CD4-positive, alpha-beta T cell (primary cell): ENCODE measurements at regions of chr17 and their contacts with region 1.

Region 1: DNA sequence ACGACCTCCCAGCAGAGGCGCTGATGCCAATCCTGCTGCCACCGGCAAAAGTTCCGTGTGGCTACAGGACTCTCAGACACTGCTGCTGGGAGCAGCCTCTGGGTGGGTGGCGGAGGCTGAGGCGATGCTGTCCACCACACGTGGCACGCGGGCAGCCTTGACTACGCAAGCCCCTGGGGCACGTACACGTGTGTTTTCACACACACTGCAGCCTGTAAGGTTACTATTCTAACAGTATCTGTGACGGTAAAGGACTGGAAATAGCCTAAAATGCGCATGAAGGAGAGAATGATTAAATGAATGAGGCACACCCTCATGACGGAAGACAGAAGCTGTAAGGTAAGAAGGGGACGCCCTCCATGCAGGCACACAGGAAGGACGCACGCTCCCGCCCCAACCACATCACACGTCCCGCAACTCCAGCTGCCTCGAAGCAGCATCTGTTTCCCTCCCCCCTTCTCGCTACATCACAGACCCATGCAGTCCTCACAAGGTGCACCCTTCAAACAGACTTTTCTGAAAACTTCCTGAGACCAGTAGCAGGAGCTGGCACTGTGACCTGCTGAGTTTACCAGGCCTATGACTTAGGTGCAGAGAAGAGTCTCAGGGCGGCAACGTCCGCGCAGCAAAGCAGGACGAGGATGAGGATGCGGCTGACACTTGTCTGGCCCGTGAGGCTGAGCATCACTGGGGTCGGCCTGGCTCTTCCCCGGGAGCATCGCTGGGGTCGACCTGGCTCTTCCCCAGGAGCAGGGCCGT is 28.7 kb upstream of the FASN start:
- DNase-seq: peak; percentile 77 to 98 (median 88)
- ATAC-seq: peak; percentile 78
- H3K4me3 ChIP-seq: peak overlapping the region; percentile 40
- H3K4me3 Mint-ChIP-seq: peak overlapping the region; percentile 39
- H3K27ac ChIP-seq: peak overlapping the region; percentile 83 to 94
- H3K27ac Mint-ChIP-seq: peak overlapping the region; percentile 97
- H3K4me1 ChIP-seq: peaks cover 79% of the 10 kb centered on the region
- H3K4me1 Mint-ChIP-seq: peaks cover 76% of the 10 kb centered on the region
- H3K27me3 ChIP-seq: no peaks in the 10 kb centered on the region
- H3K27me3 Mint-ChIP-seq: no peaks in the 10 kb centered on the region
- CTCF ChIP-seq: peak; percentile 19

Region 2: GRCh38 chr17:81794509-81794908 is 332.2 kb before region 1 on chr17:
- CTCF ChIA-PET with region 1: no interaction called
- POLR2A ChIA-PET with region 1: no interaction called
- intact Hi-C with region 1: no loop called
- DNase-seq: no peak
- ATAC-seq: no peak
- H3K4me3 ChIP-seq: no peak overlapping the region
- H3K4me3 Mint-ChIP-seq: no peak overlapping the region
- H3K27ac ChIP-seq: no peak overlapping the region
- H3K27ac Mint-ChIP-seq: no peak overlapping the region
- H3K4me1 ChIP-seq: no peaks in the 10 kb centered on the region
- H3K4me1 Mint-ChIP-seq: no peaks in the 10 kb centered on the region
- H3K27me3 ChIP-seq: peaks cover 8 to 9% of the 10 kb centered on the region in 2 experiments
- H3K27me3 Mint-ChIP-seq: peaks cover 4% of the 10 kb centered on the region
- CTCF ChIP-seq: no peak

Region 3: DNA sequence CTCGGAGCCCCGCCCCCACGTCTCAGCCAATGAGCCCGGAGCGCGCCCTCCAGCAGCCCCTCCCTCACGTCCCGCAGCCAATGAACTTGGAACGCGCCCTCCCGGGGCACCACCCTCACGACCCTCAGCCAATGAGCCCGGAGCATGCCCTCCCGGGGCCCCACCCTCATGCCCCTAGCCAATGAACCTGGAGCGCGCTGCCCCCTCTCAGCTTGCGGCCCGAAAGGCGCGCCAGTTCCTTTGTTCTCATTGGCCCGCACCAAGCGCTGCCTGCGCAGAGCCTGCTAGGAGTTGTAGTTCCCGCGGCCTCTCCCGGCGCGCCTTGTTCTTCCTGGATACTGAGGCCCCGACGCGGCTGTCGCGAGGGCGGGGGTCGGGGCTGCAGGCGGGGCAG is 103.8 kb before region 1 on chr17 and contains the start of gene LRRC45:
- CTCF ChIA-PET with region 1: no interaction called
- POLR2A ChIA-PET with region 1: interaction called, 12 read pairs
- intact Hi-C with region 1: no loop called
- DNase-seq: peak; percentile 99 to 100 (median 100)
- ATAC-seq: peak; percentile 94
- H3K4me3 ChIP-seq: peak within 1 kb of the TSS; percentile 71
- H3K4me3 Mint-ChIP-seq: peak within 1 kb of the TSS; percentile 92
- H3K27ac ChIP-seq: peak within 1 kb of the TSS in 1 of 2 donors; percentile 46
- H3K27ac Mint-ChIP-seq: peak within 1 kb of the TSS; percentile 69
- H3K4me1 ChIP-seq: peaks cover 47% of the 10 kb centered on the region
- H3K4me1 Mint-ChIP-seq: peaks cover 21% of the 10 kb centered on the region
- H3K27me3 ChIP-seq: no peaks in the 10 kb centered on the region
- H3K27me3 Mint-ChIP-seq: no peaks in the 10 kb centered on the region
- CTCF ChIP-seq: no peak
- total RNA-seq, gene LRRC45: 17.7 to 17.9 TPM

Region 4: DNA sequence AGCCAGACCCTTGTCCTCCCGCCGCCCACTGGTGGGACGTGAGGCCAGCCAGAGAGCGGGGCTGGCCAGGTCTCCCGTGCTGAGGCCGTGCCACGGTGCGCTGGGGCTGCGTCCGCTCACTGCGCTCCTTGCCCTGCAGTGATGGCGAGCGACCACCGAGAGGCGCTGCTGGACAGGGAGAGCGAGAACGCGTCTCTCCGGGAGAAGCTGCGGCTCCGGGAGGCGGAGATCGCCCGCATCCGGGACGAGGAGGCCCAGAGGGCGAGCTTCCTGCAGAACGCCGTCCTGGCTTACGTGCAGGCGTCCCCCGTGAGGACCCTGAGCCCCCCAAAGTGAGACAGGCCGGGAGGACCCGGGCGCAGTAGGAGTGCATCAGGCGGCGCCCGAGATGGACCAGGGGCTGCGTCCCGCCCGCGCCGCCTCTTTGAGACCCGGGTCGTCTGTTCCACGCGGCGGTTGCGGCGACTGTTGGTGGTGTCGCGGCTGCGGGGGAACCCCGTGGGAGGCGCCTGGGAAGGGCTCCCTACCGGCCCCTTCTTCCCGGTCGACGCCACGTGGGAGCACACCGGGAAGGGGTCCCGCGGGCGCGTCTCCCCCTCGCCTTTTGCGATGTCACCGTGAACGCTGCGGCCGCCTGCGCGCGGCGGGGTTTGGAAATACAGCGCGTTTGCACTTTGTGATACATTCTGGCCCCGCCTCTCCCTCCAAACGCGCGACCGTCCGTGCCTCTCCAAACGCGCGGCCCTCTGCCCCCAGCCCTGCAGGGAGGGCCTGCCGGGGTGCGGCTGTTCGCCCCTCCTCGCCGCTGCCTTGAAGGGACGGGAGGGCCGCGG is 96.0 kb before region 1 on chr17:
- CTCF ChIA-PET with region 1: interaction called, 10 read pairs
- POLR2A ChIA-PET with region 1: interaction called, 10 read pairs
- intact Hi-C with region 1: loop called in 1 of 2 experiments (anchors 10 kb)
- DNase-seq: peak; percentile 73 to 92 (median 81)
- ATAC-seq: peak; percentile 85
- H3K4me3 ChIP-seq: peak overlapping the region; percentile 53
- H3K4me3 Mint-ChIP-seq: peak overlapping the region; percentile 91
- H3K27ac ChIP-seq: no peak overlapping the region
- H3K27ac Mint-ChIP-seq: no peak overlapping the region
- H3K4me1 ChIP-seq: peaks cover 28% of the 10 kb centered on the region
- H3K4me1 Mint-ChIP-seq: peaks cover 21% of the 10 kb centered on the region
- H3K27me3 ChIP-seq: no peaks in the 10 kb centered on the region
- H3K27me3 Mint-ChIP-seq: no peaks in the 10 kb centered on the region
- CTCF ChIP-seq: peak; percentile 97

Region 5: DNA sequence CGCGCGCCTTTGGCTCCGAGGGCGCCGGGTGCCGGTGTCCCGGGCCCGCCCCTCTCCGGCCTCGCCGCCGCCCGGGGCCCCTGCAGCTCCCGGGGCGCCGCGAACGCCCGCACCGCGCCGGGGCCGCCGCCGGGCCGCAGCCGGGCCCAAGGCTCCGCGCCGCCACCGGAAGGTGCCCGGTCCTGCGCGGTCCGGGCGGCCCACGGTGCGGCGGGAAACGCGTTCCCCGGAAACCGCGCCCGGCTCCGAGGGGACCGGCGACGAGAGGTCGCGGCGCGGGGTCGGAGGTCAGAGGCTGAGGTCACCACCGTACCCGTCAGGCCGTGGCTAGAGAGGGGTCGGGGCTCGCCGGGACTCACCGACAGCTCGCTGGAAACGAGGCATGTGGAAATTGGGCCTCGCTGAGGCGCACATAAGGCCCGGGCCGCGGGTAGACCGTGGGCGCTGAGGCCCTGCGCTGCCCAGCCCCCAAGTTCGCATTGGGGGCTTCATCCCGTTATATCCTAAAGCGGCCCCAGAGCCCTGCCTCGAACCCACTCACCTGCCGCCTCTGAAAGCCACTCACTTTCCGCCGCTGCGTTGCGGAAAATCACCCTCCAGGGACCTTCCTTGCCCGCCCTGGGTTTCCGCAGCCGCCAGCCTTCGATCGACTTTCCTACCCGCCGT is 61.0 kb before region 1 on chr17 and contains the start of gene DUS1L:
- CTCF ChIA-PET with region 1: no interaction called
- POLR2A ChIA-PET with region 1: interaction called, 17 read pairs
- intact Hi-C with region 1: no loop called
- DNase-seq: peak; percentile 43 to 89 (median 66)
- ATAC-seq: peak; percentile 88
- H3K4me3 ChIP-seq: peak within 1 kb of the TSS; percentile 81
- H3K4me3 Mint-ChIP-seq: peak within 1 kb of the TSS; percentile 89
- H3K27ac ChIP-seq: peak within 1 kb of the TSS; percentile 65 to 85
- H3K27ac Mint-ChIP-seq: peak within 1 kb of the TSS; percentile 88
- H3K4me1 ChIP-seq: peaks cover 34% of the 10 kb centered on the region
- H3K4me1 Mint-ChIP-seq: peaks cover 9% of the 10 kb centered on the region
- H3K27me3 ChIP-seq: no peaks in the 10 kb centered on the region
- H3K27me3 Mint-ChIP-seq: no peaks in the 10 kb centered on the region
- CTCF ChIP-seq: no peak
- total RNA-seq, gene DUS1L: 160 to 163 TPM

Region 6: GRCh38 chr17:82105882-82106687 is 20.6 kb before region 1 on chr17:
- CTCF ChIA-PET with region 1: interaction called, 12 read pairs
- POLR2A ChIA-PET with region 1: interaction called, 27 read pairs
- intact Hi-C with region 1: loop called in 1 of 2 experiments (anchors 1 kb)
- DNase-seq: peak in 13 of 14 experiments; percentile 32 to 78 (median 55)
- ATAC-seq: peak; percentile 70
- H3K4me3 ChIP-seq: peak overlapping the region; percentile 61
- H3K4me3 Mint-ChIP-seq: peak overlapping the region; percentile 83
- H3K27ac ChIP-seq: peak overlapping the region; percentile 79 to 90
- H3K27ac Mint-ChIP-seq: peak overlapping the region; percentile 95
- H3K4me1 ChIP-seq: peaks cover 43% of the 10 kb centered on the region
- H3K4me1 Mint-ChIP-seq: peaks cover 22% of the 10 kb centered on the region
- H3K27me3 ChIP-seq: no peaks in the 10 kb centered on the region
- H3K27me3 Mint-ChIP-seq: no peaks in the 10 kb centered on the region
- CTCF ChIP-seq: peak; percentile 36

Region 7: DNA sequence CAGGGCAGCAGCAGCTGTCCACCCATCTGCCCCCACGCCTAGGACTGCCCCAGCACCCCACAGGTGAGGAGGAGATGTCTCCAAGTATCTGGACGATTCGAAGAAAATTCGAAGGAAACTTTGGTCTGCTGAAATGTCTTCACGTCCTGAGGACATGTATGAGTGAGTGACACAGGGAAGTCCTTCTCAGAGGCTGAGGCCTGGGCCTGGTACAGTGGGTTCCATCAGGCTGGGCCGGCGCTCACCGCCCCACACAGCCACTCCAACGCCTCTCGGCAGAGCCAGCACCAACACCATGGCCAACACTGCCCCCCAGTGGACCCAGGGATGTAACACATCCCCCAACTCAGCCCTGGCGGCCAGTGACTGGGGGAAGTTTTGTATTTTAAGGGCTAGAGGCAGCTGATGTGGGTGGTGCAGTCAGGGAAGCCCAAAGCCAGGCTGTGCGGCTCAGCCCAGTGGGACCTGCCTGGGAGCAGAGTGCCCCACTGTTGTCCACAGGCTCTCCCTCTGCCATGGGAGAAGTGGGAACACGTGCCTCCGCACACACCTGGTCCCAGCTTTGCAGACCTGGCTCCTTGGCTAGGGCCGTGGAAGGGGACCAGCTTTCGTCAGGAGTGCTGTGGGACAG is 27.1 kb after region 1 on chr17:
- CTCF ChIA-PET with region 1: interaction called, 4 read pairs
- POLR2A ChIA-PET with region 1: interaction called, 18 read pairs
- intact Hi-C with region 1: loop called in 1 of 2 experiments (anchors 1 kb)
- DNase-seq: peak; percentile 76 to 90 (median 82)
- ATAC-seq: peak; percentile 100
- H3K4me3 ChIP-seq: no peak overlapping the region
- H3K4me3 Mint-ChIP-seq: no peak overlapping the region
- H3K27ac ChIP-seq: no peak overlapping the region
- H3K27ac Mint-ChIP-seq: peak overlapping the region; percentile 69
- H3K4me1 ChIP-seq: peaks cover 10% of the 10 kb centered on the region
- H3K4me1 Mint-ChIP-seq: peaks cover 5% of the 10 kb centered on the region
- H3K27me3 ChIP-seq: no peaks in the 10 kb centered on the region
- H3K27me3 Mint-ChIP-seq: no peaks in the 10 kb centered on the region
- CTCF ChIP-seq: peak; percentile 91

Region 8: DNA sequence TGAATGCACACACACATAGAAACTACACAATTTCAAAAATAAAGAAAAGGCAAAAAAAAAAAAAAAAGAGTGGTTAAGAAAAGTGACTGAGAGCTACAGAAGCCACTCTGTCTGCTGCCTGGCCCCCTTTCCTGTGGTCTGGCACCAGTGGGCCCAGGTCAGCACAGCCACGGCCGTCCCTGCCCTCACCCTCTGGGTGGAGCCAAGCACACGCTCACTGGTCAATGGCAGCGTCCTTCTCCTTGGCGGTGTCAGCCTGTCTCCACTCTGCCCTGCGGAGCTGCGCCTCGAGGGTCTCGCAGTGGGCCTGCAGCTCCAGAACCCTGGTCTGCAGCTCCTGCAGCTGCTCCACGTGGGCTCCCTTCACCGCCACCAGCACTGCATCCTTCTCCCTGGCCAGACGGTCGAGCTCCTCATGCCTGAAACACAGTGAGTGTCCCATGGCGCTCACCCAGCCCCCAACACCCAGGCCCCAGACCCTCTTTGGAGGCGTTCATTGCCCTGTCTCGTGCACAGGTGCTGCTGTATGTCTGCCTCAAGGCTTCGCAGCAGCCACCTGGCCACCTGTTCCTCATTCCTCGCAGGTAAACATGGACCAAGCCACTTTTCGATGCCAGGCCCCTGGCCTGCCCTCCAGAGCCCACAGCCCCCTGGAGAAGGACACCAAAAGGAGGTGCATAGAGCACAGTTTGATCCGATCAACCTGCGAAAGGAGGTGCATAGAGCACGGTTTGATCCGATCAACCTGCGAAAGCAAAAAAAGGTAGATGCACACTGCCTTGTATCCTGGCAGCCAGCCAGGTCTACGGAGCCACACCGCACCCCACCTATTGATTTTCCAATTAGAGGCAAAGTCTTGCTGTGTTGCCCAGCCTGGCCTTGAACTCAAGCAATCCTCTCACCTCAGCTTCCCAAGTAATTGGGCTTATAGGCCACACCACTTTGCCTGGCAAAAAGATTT is 61.5 kb after region 1 on chr17:
- CTCF ChIA-PET with region 1: no interaction called
- POLR2A ChIA-PET with region 1: no interaction called
- intact Hi-C with region 1: no loop called
- DNase-seq: no peak
- ATAC-seq: no peak
- H3K4me3 ChIP-seq: no peak overlapping the region
- H3K4me3 Mint-ChIP-seq: no peak overlapping the region
- H3K27ac ChIP-seq: no peak overlapping the region
- H3K27ac Mint-ChIP-seq: no peak overlapping the region
- H3K4me1 ChIP-seq: no peaks in the 10 kb centered on the region
- H3K4me1 Mint-ChIP-seq: no peaks in the 10 kb centered on the region
- H3K27me3 ChIP-seq: no peaks in the 10 kb centered on the region
- H3K27me3 Mint-ChIP-seq: no peaks in the 10 kb centered on the region
- CTCF ChIP-seq: no peak

Region 9: DNA sequence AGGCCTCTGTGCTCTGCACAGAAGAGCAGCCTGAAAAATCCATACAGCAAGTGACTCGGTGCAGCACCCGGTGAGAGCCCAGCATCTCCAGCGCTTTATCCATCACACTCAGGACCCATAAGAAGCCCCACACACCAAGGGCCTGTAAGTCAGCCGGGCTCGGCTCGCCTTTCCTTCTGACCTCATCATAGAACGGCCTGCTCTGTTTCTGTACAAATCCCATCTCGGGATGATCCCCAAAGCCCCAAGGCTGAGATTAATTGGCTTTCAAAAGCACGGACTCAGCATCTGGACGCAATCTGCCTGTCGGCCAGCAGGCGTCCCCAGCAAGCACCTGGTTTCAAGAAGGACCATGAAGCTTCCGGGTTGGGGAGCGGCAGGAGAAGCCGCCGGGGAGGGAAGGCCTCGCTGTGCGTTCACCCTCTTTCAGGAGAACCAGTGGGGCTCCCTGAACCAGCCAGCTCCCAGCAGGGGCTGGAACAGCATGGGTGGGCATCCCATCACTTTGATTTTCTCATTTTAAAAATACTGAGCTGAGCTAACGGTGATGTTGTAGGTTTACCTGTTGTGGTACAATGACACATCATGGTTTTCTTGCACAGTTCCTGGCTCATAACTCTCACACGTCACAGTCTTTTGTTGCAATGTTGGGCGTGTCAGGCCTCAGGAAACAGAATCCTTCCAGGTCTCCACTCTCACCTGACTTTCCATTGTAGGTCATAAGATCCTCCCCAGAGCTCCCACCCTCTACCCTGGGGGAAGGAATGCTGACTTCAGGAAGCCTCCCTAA is 79.2 kb after region 1 on chr17:
- CTCF ChIA-PET with region 1: no interaction called
- POLR2A ChIA-PET with region 1: interaction called, 11 read pairs
- intact Hi-C with region 1: loop called in 1 of 2 experiments (anchors 2 kb)
- DNase-seq: peak; percentile 60 to 91 (median 77)
- ATAC-seq: peak; percentile 86
- H3K4me3 ChIP-seq: peak overlapping the region; percentile 16
- H3K4me3 Mint-ChIP-seq: peak overlapping the region; percentile 23
- H3K27ac ChIP-seq: peak overlapping the region; percentile 77 to 79
- H3K27ac Mint-ChIP-seq: peak overlapping the region; percentile 95
- H3K4me1 ChIP-seq: peaks cover 25% of the 10 kb centered on the region
- H3K4me1 Mint-ChIP-seq: peaks cover 50% of the 10 kb centered on the region
- H3K27me3 ChIP-seq: no peaks in the 10 kb centered on the region
- H3K27me3 Mint-ChIP-seq: no peaks in the 10 kb centered on the region
- CTCF ChIP-seq: peak; percentile 92

Region 10: GRCh38 chr17:82716203-82717010 is 589.7 kb after region 1 on chr17 and contains the start of gene FN3KRP:
- CTCF ChIA-PET with region 1: no interaction called
- POLR2A ChIA-PET with region 1: no interaction called
- intact Hi-C with region 1: no loop called
- DNase-seq: peak; percentile 69 to 99 (median 87)
- ATAC-seq: peak; percentile 87
- H3K4me3 ChIP-seq: peak within 1 kb of the TSS; percentile 72
- H3K4me3 Mint-ChIP-seq: peak within 1 kb of the TSS; percentile 97
- H3K27ac ChIP-seq: peak within 1 kb of the TSS; percentile 5 to 50
- H3K27ac Mint-ChIP-seq: peak within 1 kb of the TSS; percentile 56
- H3K4me1 ChIP-seq: peaks cover 24% of the 10 kb centered on the region
- H3K4me1 Mint-ChIP-seq: peaks cover 31% of the 10 kb centered on the region
- H3K27me3 ChIP-seq: no peaks in the 10 kb centered on the region
- H3K27me3 Mint-ChIP-seq: no peaks in the 10 kb centered on the region
- CTCF ChIP-seq: no peak
- total RNA-seq, gene FN3KRP: 30.6 to 31.2 TPM